ENCODE measurements at regions of chr4 and their contacts with region 1.

Region 1: GRCh38 chr4:158850800-158851644 is 82.2 kb downstream of the FNIP2 start:
- DNase-seq: peak; percentile 15
- ATAC-seq: no peak
- H3K4me3 ChIP-seq: no peak overlapping the region
- H3K27ac ChIP-seq: no peak overlapping the region
- H3K4me1 ChIP-seq: no peaks in the 10 kb centered on the region
- H3K27me3 ChIP-seq: no peaks in the 10 kb centered on the region
- CTCF ChIP-seq: peak; percentile 55 to 71 (median 66); a peak in 5 of 6 replicates
- POLR2A ChIP-seq: no peak
- RAD21 ChIP-seq: peak; percentile 65

Region 2: DNA sequence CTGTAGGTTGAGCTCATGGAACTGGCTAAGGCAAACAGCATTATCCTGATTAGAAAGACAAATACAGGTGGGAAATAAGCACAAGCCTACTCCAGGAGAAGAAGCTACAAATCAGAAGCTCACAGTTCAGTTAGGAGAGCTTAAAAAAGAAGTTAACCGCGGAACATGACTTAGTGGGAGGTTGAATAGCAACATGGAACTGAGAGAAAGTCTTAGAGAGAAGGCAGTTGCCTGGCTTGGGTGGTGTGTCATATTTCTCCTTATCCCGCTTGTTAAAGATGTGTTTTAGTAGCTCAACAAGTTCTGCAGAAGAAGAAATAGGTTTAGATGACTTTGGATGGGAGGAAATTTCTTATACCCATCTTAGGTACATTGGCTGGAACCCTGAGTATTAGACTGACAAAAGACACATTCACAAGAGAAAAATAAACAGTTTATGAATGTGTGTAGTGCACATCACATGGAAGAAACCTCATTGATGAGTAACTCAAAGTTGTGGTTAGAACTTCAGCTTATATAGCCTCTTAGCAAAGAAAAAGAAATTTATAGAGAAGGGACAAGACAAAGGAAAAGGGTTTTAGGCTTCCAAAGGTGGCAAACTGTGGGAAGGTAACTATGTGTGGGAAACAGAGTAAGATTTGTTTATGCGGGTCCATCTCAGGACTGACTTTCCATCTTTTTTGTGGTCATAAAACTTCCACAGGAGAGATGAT is 366.7 kb before region 1 on chr4:
- CTCF ChIA-PET with region 1: no interaction called
- POLR2A ChIA-PET with region 1: no interaction called
- RAD21 ChIA-PET with region 1: no interaction called
- intact Hi-C with region 1: no loop called
- DNase-seq: no peak
- ATAC-seq: no peak
- H3K4me3 ChIP-seq: no peak overlapping the region
- H3K27ac ChIP-seq: no peak overlapping the region
- H3K4me1 ChIP-seq: no peaks in the 10 kb centered on the region
- H3K27me3 ChIP-seq: no peaks in the 10 kb centered on the region
- CTCF ChIP-seq: no peak
- POLR2A ChIP-seq: no peak
- RAD21 ChIP-seq: no peak

Region 3: DNA sequence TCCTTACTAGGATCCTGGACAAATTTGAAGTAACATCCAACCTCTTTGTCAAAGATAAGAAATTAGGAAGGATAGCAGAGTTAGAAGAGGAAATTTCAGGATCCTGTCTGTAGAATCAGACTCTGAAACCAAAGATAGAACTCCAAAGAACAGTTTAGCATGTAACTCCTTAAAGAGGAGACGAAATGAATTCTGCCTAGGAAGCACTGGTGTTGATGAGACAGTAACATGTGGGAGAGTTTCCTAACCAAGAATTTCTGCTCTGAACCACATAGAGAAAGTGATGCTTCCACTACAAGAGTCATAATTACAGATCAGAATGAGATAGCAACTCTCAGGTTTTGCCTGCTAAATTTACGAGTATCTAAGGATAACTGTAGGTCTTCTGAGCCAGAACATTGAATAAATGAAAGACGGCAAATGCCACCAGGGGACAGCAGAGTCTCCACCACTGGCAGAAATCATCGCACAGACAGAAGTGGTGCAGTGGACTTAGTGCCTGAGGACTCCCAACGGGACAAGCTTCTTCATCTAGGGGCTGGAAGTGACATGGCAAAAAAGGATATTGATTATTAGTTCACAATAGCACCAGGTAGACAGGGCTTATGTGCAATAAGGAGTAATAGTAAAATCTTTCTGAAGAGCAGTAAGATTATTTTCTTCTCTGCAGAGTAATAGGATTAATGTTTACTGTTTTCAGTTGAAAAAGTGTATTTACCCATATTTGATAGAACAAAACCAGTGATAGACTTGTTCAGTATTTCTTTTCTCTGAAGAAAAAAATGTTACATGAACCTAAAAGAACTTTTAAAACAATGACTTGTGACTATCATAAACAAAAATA is 121.1 kb before region 1 on chr4:
- CTCF ChIA-PET with region 1: interaction called, 4 read pairs
- POLR2A ChIA-PET with region 1: no interaction called
- RAD21 ChIA-PET with region 1: no interaction called
- intact Hi-C with region 1: loop called (anchors 1 kb)
- DNase-seq: peak; percentile 61
- ATAC-seq: peak; percentile 99
- H3K4me3 ChIP-seq: no peak overlapping the region
- H3K27ac ChIP-seq: no peak overlapping the region
- H3K4me1 ChIP-seq: no peaks in the 10 kb centered on the region
- H3K27me3 ChIP-seq: peaks cover 7% of the 10 kb centered on the region; the same call in 1 of the 2 replicates
- CTCF ChIP-seq: peak; percentile 71 to 86 (median 81)
- POLR2A ChIP-seq: no peak
- RAD21 ChIP-seq: peak; percentile 90

Region 4: GRCh38 chr4:159312236-159312635 is 461.2 kb after region 1 on chr4:
- CTCF ChIA-PET with region 1: no interaction called
- POLR2A ChIA-PET with region 1: no interaction called
- RAD21 ChIA-PET with region 1: no interaction called
- intact Hi-C with region 1: loop called (anchors 5 kb)
- DNase-seq: no peak
- ATAC-seq: no peak
- H3K4me3 ChIP-seq: no peak overlapping the region
- H3K27ac ChIP-seq: no peak overlapping the region
- H3K4me1 ChIP-seq: peaks cover 0 to 12% of the 10 kb centered on the region in 2 experiments; a peak in 2 of 4 replicates
- H3K27me3 ChIP-seq: no peaks in the 10 kb centered on the region
- CTCF ChIP-seq: no peak
- POLR2A ChIP-seq: no peak
- RAD21 ChIP-seq: no peak